Ascending aorta (tissue), 2 donors: ENCODE measurements at regions of chr9 and their contacts with region 1.

Region 1: DNA sequence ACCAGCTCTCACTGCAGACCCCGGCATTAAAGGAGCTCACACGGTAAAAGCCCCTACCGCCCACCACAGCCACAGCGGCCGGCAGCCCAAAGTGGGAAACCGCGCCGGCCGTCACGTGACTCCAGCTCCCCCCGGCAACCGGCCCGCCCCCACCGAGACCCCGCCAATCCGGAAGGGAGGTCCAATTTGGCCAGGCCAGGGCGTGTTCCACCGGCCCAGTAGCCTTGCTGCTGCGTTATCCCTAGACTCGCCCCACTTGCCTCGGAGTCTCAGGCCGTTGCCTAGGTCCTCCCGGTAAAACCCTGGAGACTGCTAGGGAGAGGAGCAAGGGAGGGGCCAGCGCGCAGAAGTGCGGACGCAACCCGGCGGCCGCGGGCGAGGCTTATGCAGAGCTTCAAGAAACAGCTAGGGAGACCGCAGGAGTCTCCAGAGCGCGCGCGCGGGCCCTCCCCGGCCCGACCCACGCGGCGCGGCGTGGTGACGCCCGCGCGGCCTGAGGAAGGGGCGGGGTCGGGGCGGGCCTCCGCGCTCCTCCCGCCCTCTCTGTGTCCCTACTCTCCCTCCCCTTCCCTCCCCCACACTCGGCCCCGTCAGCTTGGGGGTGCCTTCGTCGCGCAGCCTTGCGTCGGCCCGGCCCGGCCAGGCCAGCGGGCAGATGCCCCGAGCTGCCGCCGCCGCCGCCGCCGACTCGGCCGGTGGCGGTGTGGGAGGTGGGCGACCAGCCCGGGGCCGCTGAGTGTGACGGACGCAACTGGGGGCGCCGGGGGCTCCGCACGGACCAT is at the start of gene RIC1:
- DNase-seq: peak; percentile 77 to 95
- H3K4me3 ChIP-seq: peak within 1 kb of the TSS; percentile 93 to 98
- H3K27ac ChIP-seq: peak within 1 kb of the TSS; percentile 95 to 99
- H3K4me1 ChIP-seq: peaks cover 5 to 43% of the 10 kb centered on the region in 2 donors
- H3K27me3 ChIP-seq: no peaks in the 10 kb centered on the region
- CTCF ChIP-seq: no peak
- total RNA-seq, gene RIC1: 46.7 TPM

Region 2: GRCh38 chr9:4679268-4680172 is 949.2 kb before region 1 on chr9 and contains the start of gene CDC37L1:
- intact Hi-C with region 1: loop called (anchors 5 kb)
- DNase-seq: peak; percentile 87 to 99
- H3K4me3 ChIP-seq: peak within 1 kb of the TSS; percentile 79 to 91
- H3K27ac ChIP-seq: peak within 1 kb of the TSS; percentile 97 to 98
- H3K4me1 ChIP-seq: peaks cover 0 to 16% of the 10 kb centered on the region in 2 donors
- H3K27me3 ChIP-seq: no peaks in the 10 kb centered on the region
- CTCF ChIP-seq: peak; percentile 61 to 76 (median 76)
- total RNA-seq, gene CDC37L1: 17.2 TPM

Region 3: GRCh38 chr9:5749306-5749705 is 120.6 kb after region 1 on chr9:
- intact Hi-C with region 1: loop called (anchors 10 kb)
- DNase-seq: no peak
- H3K4me3 ChIP-seq: no peak overlapping the region
- H3K27ac ChIP-seq: no peak overlapping the region
- H3K4me1 ChIP-seq: no peaks in the 10 kb centered on the region
- H3K27me3 ChIP-seq: no peaks in the 10 kb centered on the region
- CTCF ChIP-seq: no peak